AG04449 (cell line): ENCODE measurements at regions of chr1 and their contacts with region 1.

Region 1: GRCh38 chr1:159891275-159892157 is 8.4 kb downstream of the CFAP45 start:
- DNase-seq: peak; percentile 58
- H3K4me3 ChIP-seq: no peak overlapping the region
- CTCF ChIP-seq: peak; percentile 99

Region 2: DNA sequence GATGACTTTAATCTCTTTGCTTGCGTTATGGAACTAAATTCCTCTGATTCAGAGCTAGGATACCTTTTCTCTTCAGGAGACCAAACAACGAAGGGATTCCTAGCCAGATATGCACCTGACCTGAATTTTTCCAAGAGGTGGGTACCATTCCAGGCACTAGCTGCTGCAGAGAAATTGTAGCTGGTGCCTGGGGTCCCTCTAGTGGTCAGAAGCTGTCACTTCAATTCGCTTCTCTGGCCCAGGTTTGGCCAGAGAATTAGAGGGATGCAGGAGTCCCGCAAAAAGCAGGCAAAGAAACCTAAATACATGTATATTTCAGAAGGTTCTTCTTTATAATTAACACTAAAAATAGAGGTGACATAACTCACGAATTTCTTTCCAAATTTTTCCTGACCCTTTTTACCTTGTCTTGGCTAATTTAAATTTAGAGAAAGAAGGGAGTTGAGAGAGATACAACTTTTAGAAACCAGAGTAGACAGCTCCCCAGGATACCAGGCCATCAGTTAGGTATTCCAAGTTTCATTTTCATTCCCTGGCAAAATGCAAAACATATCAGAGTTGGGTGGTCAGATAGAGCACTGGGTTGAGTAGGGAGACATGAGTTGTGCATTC is 677.3 kb before region 1 on chr1:
- CTCF ChIA-PET with region 1: interaction called, 15 read pairs
- POLR2A ChIA-PET with region 1: no interaction called
- DNase-seq: no peak
- H3K4me3 ChIP-seq: no peak overlapping the region
- CTCF ChIP-seq: peak; percentile 85

Region 3: DNA sequence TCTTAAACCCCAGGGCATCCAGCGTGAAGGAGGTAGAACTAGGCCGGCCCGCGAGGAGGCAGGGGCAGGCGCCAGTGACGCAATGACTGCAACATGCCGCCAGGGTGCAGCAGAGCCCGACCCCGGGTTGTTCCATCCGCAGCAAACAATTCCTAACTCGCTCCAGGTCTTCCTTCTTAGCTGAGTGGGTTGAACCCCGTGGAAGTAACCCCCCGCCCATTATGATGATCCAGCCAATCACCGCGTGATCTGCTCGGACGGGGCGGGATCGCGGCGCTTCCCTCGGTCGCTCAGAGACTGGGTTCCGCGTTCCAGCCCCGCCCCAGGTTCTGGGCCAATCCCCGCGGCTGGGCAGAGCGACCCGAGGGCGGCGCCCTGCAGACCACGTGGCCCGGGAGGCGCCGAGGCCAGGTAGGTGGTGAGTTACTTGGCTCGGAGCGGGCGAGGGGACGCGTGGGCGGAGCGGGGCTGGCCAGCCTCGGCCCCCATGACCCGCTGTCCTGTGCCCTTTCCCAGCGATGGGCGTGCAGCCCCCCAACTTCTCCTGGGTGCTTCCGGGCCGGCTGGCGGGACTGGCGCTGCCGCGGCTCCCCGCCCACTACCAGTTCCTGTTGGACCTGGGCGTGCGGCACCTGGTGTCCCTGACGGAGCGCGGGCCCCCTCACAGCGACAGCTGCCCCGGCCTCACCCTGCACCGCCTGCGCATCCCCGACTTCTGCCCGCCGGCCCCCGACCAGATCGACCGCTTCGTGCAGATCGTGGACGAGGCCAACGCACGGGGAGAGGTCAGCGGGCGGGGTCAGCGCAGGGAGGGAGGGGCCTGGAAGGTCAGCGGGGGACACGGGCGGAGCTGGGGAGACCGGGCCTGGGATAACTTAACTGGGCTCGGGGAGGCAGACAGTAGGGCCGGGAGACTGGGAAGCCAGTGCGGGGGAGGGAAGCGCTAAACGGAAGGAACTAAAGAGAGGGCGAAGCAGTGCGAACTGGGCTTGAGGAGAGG is 110.6 kb before region 1 on chr1 and contains the start of gene DUSP23:
- CTCF ChIA-PET with region 1: interaction called, 201 read pairs
- POLR2A ChIA-PET with region 1: no interaction called
- DNase-seq: peak; percentile 92
- H3K4me3 ChIP-seq: peak within 1 kb of the TSS; percentile 85
- CTCF ChIP-seq: peak; percentile 96

Region 4: DNA sequence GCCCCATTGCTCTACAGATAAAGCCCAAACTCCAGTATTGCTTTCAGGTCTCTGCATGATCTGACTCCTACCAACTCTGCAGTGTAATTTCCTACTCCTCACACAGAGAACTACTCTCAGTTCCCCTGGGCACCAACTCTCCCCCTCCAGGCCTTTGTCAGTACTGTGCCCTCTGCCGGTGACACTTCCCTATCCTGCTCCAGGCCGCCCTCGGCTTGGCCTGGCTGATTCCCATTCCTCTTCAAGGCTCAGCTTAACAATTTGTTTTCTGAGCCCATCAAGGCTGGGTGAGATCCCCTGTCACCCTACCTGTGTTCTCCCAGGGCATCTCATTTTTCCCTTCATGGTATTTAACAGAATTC is 62.3 kb before region 1 on chr1:
- CTCF ChIA-PET with region 1: interaction called, 207 read pairs
- POLR2A ChIA-PET with region 1: no interaction called
- DNase-seq: no peak
- H3K4me3 ChIP-seq: no peak overlapping the region
- CTCF ChIP-seq: peak; percentile 19

Region 5: DNA sequence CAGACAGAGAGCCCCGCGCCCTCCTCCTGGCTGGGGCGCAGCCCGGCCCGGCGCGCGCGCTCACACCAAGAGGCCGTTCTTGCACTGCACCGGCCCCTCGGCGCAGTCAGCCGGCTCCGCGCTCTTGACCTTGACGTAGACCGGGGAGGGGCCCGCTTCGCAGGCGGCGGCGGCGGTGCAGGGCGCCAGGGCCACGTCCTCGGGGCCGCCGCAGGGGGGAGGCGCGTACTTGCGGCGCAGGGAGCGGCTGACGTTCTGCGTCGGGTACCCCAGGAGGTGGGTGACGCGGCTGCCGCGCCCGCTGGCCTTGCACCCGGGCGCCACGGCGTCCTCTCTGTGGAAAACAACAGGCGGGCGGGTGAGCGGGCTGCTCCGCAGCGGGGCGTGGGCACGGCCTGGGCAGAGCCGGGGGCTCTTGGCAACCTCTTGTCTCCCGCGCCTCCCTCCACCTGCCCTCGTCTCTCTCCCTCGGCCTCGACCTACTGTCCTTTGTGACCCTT is 36.8 kb before region 1 on chr1:
- CTCF ChIA-PET with region 1: interaction called, 57 read pairs
- POLR2A ChIA-PET with region 1: interaction called, 6 read pairs
- DNase-seq: no peak
- H3K4me3 ChIP-seq: peak overlapping the region; percentile 63
- CTCF ChIP-seq: no peak

Region 6: DNA sequence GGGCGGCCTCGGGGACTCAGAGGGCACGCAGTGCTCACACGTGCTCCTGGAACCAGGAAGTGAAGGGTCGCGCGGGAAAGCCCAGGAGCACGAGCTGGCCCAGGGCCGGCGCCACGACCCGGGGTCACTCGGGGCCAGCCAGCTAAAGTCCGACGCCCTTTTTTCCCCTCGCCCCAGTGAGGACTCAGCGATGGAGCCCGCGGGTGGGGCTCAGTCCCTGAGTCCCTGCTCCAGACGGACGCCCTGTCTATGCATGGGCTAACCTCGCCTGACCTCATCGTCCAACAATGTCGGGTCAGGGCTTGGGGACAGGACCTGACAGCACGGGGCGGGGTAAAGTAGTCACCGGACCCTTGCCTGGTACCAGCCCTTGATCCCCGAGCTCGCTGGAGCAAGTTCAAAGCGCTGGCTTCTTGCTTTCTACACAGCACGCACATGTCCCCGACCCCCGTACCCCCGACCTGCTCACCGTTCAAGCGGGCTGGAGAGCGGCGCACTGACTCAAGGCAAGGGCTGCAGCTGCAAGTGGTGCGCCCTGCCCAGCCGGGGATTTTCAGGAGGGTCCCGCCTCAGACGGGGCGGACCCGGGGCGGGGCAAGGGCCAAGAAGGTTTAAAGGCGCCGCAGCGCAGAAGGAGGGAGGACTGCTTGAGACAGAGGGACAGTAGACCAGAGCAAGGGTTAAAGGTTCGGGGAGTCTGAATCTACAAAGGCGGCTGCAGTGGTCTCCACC is 33.6 kb after region 1 on chr1 and contains the start of gene TAGLN2:
- CTCF ChIA-PET with region 1: interaction called, 33 read pairs
- POLR2A ChIA-PET with region 1: interaction called, 8 read pairs
- DNase-seq: no peak
- H3K4me3 ChIP-seq: peak within 1 kb of the TSS; percentile 99
- CTCF ChIP-seq: no peak

Region 7: DNA sequence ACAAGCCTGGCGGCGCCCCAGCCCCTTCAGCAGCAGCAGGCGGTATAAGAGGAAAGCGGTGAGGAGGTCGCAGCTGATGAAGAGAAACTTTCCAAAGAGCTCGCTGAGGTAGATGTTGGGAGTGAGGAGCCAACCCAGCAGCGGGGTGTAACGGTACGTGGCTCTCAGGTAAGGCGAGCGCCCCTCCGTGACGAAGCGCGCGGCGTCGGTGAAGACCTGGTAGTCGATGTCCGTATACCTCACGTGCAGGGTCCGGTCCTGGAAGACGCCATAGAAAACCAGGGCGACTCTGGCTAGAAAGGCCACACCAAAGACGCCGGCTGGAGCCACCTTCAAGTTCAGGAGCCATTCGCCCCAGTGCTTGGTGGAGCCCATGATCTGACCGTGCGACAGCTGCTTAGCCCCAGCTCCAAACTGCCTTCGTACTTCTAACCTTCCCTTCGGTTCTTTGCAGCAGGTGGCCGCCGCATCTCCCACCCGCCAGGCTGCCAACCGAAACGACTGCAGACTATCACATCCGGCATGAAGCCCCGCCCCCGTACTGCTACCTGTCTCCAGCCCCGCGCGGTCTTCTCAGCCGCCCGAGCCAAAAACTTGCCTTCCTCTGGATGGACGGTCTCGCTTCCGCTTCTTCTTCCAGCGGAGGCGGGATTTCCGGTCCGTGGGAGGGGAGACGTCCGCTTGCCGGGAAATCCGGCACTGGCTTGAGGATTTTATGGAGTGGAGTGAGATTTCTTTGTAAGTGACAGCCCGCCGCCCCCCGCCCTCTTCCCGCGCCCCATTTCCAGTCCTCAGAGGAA is 140.0 kb after region 1 on chr1 and contains the start of gene PIGM:
- CTCF ChIA-PET with region 1: no interaction called
- POLR2A ChIA-PET with region 1: no interaction called
- DNase-seq: peak; percentile 38
- H3K4me3 ChIP-seq: peak within 1 kb of the TSS; percentile 88
- CTCF ChIP-seq: no peak